ENCODE measurements at regions of chr21 and their contacts with region 1.

Region 1: DNA sequence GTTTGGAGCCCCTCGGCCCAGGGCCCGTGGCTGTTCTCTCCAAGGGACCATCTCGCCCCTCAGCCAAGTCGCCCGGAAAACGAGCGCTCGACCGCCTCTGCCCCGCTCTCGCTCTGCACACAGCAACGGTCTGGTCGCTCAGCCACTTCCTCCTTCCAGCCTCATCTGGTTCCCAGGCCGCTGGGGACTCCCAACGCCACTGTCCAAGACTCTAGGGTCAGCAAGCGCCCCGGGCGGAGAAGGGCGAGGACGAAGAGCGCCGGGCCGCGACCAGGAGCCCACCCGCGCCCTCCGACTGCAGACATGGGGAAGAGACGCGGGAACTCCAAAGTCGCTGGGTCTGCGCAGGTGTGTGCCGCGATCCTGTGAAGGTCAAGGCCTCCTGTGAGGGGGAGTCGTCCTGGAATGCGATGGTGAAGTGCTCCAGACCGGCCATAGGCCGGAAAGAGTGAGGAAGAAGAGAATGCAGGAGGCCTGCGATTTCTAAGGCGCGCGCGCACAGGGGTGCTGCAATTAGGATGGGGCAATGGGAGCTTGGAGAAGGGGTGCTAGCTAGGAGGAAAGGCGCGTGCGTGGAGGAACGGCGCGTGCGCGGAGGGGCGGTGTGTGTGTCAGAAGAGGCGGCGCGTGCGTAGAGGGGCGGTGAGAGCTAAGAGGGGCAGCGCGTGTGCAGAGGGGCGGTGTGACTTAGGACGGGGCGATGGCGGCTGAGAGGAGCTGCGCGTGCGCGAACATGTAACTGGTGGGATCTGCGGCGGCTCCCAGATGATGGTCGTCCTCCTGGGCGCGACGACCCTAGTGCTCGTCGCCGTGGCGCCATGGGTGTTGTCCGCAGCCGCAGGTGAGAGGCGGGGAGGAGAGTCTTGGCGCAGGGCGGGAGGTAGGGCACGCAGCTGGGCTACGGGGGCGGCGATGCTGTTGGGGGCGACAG is at the start of gene IFNAR1:
- DNase-seq: peak; percentile 73 to 98
- ATAC-seq: peak; percentile 96 to 97
- H3K4me3 ChIP-seq: peak within 1 kb of the TSS; percentile 74
- H3K27ac ChIP-seq: peak within 1 kb of the TSS; percentile 88 to 97
- H3K4me1 ChIP-seq: no peaks in the 10 kb centered on the region
- CTCF ChIP-seq: no peak
- EP300 ChIP-seq: no peak
- POLR2A ChIP-seq: peak; percentile 75
- RAD21 ChIP-seq: no peak
- polyA plus RNA-seq, gene IFNAR1: 13.2 and 14.2 TPM in 2 replicates

Region 2: DNA sequence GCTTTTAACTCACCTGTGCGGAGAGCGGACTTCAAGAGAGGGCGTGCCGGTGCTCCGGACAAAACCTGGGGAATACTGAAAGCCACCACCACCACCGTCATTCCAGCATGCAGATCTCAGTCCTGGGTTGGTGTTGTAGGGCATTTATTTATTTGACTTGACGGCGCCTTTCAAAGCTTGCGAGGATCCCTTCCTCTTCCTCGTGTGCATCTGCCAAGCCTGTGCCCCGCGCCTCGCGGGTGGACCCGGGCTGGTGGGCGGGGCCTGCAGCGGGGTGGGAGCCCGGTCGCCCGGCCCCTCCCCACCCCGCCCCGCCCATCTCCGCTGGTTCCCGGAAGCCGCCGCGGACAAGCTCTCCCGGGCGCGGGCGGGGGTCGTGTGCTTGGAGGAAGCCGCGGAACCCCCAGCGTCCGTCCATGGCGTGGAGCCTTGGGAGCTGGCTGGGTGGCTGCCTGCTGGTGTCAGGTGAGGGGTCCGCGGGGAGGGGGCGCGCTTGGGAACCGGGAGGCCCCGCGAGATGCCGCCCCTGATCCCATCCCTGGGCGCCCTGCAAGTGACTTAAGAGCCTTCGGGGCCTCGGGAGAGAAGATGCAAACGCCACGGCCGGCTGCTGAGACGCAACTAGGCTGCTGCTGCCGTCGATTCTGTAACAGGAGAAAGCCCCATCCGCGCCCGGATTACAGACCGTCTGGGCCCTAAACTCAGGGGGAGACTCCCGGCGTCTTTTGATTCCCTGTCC is 58.3 kb before region 1 on chr21 and contains the start of gene IL10RB:
- CTCF ChIA-PET with region 1: no interaction called
- POLR2A ChIA-PET with region 1: interaction called, 12 read pairs
- DNase-seq: peak; percentile 41 to 64
- ATAC-seq: peak; percentile 83 to 92
- H3K4me3 ChIP-seq: peak within 1 kb of the TSS; percentile 81
- H3K27ac ChIP-seq: peak within 1 kb of the TSS; percentile 88 to 90
- H3K4me1 ChIP-seq: peaks cover 33% of the 10 kb centered on the region
- CTCF ChIP-seq: no peak
- EP300 ChIP-seq: no peak
- POLR2A ChIP-seq: peak; percentile 38
- RAD21 ChIP-seq: no peak
- polyA plus RNA-seq, gene IL10RB: 31.9 and 34.9 TPM in 2 replicates

Region 3: GRCh38 chr21:33286600-33287456 is 37.7 kb before region 1 on chr21:
- CTCF ChIA-PET with region 1: no interaction called
- POLR2A ChIA-PET with region 1: interaction called, 12 read pairs
- DNase-seq: peak; percentile 33 to 84
- ATAC-seq: peak; percentile 88 to 90
- H3K4me3 ChIP-seq: no peak overlapping the region; the same call in 2 of the 3 replicates
- H3K27ac ChIP-seq: peak overlapping the region; percentile 74 to 82
- H3K4me1 ChIP-seq: peaks cover 31% of the 10 kb centered on the region
- CTCF ChIP-seq: no peak
- EP300 ChIP-seq: no peak
- POLR2A ChIP-seq: no peak
- RAD21 ChIP-seq: no peak

Region 4: GRCh38 chr21:33348706-33349105 is 24.1 kb after region 1 on chr21:
- CTCF ChIA-PET with region 1: no interaction called
- POLR2A ChIA-PET with region 1: no interaction called
- DNase-seq: no peak
- ATAC-seq: no peak
- H3K4me3 ChIP-seq: no peak overlapping the region
- H3K27ac ChIP-seq: no peak overlapping the region
- H3K4me1 ChIP-seq: no peaks in the 10 kb centered on the region
- CTCF ChIP-seq: no peak
- EP300 ChIP-seq: no peak
- POLR2A ChIP-seq: no peak
- RAD21 ChIP-seq: no peak

Measured in A549 (cell line).